Astrocyte of the cerebellum (primary cell): ENCODE measurements at regions of chr4 and their contacts with region 1.

Region 1: GRCh38 chr4:173159791-173160190 is 8.8 kb upstream of the GALNT7 start:
- DNase-seq: no peak
- H3K4me3 ChIP-seq: no peak overlapping the region
- CTCF ChIP-seq: no peak

Region 2: GRCh38 chr4:173243917-173244658 is 84.3 kb after region 1 on chr4:
- in situ Hi-C with region 1: loop called (anchors 5 kb)
- DNase-seq: no peak
- H3K4me3 ChIP-seq: no peak overlapping the region
- CTCF ChIP-seq: no peak